T-cell (primary cell): ENCODE measurements at regions of chr2 and their contacts with region 1.

Region 1: DNA sequence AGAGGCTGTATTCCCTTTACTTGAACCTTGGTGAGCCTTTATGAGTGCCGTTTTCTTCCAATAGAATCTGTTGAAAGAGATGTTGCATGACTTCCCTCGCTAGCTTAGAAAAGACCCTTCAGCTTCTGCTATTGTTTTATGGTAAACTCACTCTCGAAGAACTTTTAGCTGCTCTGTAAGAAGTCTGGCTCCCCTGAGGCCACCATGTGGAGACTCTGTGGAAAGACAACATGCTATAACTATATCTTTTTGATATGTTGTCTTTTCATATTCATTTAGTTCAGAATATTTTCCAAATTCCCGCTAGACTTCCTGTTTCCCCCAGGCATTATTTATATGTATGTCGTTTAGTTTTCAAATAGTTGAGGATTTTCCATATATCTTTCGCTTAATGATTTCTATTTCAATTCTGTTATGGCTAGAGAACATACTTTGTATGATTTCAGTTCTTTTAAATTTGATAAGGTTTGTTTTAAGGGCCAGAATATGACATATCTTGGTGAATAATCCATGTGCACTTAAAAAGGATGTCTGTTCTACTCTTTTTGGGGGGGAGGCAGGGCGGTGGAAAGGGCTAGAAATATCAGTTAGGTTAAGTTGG is 64.1 kb downstream of the PTPN4 start:
- DNase-seq: peak in 27 of 35 experiments; percentile 10 to 62 (median 30)
- ATAC-seq: peak; percentile 68 to 74 (median 71)
- H3K4me3 ChIP-seq: no peak overlapping the region
- H3K4me3 Mint-ChIP-seq: no peak overlapping the region
- H3K27ac ChIP-seq: no peak overlapping the region
- H3K27ac Mint-ChIP-seq: peak overlapping the region; percentile 41 to 48
- H3K4me1 ChIP-seq: peaks cover 0 to 4% of the 10 kb centered on the region in 2 experiments
- H3K4me1 Mint-ChIP-seq: peaks cover 50 to 69% (median 67%) of the 10 kb centered on the region in 3 donors
- H3K27me3 ChIP-seq: no peaks in the 10 kb centered on the region
- H3K27me3 Mint-ChIP-seq: no peaks in the 10 kb centered on the region

Region 2: DNA sequence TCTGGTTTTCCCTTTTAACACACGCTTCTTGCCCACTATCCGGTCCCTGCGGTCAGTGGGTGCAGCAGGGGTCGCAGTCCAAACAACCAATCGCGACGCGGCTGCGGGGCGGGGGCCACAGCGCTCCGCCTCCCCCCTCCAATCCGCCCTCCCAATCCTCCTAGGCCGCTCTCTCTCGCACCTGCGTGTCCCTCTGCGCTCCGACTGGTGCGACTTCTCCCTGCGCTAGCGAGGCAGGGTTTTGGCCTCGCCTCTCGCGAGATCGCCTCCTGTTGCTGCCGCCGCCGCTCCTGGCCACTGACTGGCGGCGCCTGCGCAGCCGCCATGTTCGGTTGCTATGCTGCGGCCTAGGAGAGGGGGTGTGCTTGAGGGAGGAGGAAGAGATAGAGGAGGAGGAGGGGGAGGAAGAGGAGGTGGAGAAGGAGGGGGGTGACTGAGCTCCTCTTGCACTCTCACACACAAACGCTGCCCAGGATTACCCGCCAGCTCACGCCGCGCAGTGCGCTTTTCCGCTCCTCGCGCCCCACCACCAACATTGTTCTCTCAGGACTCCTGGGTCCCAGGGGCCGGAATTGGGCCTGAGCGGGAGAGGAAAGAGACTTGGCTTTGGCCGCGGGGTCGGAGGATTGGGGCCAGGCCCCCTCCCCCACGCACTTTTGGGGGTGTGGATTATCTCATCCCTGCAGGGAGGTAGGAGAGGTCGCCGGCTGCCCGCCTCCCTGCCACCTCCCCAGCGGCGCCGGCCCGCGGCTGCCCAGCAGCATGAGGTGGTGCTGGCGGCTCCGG is 64.2 kb before region 1 on chr2 and contains the start of gene PTPN4:
- CTCF ChIA-PET with region 1: interaction called, 3 to 10 read pairs
- POLR2A ChIA-PET with region 1: interaction called in 1 of 2 experiments, 6 read pairs
- DNase-seq: peak; percentile 86 to 99 (median 96)
- ATAC-seq: peak; percentile 89 to 92 (median 90)
- H3K4me3 ChIP-seq: peak within 1 kb of the TSS; percentile 95 to 98
- H3K4me3 Mint-ChIP-seq: peak within 1 kb of the TSS; percentile 83 to 93 (median 93)
- H3K27ac ChIP-seq: peak within 1 kb of the TSS; percentile 89
- H3K27ac Mint-ChIP-seq: peak within 1 kb of the TSS; percentile 82 to 84
- H3K4me1 ChIP-seq: peaks cover 7 to 19% of the 10 kb centered on the region in 2 experiments
- H3K4me1 Mint-ChIP-seq: peaks cover 42 to 45% (median 45%) of the 10 kb centered on the region in 3 donors
- H3K27me3 ChIP-seq: no peaks in the 10 kb centered on the region
- H3K27me3 Mint-ChIP-seq: no peaks in the 10 kb centered on the region
- total RNA-seq, gene PTPN4: 105 to 134 (median 126) TPM

Region 3: DNA sequence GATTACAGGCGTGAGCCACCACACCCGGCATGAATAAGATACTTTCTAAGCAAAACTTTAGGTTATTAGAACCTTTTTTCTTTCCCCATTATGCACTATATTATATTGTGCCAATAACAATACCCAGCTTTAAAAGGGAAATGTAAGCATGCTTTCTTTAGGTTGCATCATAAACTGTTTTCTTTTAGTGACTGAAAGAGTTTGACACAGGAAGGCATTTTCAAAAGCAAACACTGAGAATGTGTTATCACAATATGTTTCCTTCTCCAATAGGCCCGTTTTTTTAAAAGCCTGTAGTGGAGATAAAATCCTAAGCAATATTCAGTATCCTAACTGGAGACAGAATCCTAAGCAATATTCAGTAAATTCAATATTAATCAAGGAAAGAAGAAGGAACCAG is 172.3 kb after region 1 on chr2:
- CTCF ChIA-PET with region 1: interaction called in 1 of 2 experiments, 13 read pairs
- POLR2A ChIA-PET with region 1: no interaction called
- DNase-seq: no peak
- ATAC-seq: no peak
- H3K4me3 ChIP-seq: no peak overlapping the region
- H3K4me3 Mint-ChIP-seq: no peak overlapping the region
- H3K27ac ChIP-seq: no peak overlapping the region
- H3K27ac Mint-ChIP-seq: no peak overlapping the region
- H3K4me1 ChIP-seq: no peaks in the 10 kb centered on the region
- H3K4me1 Mint-ChIP-seq: no peaks in the 10 kb centered on the region
- H3K27me3 ChIP-seq: peaks cover 0 to 2% of the 10 kb centered on the region in 2 experiments
- H3K27me3 Mint-ChIP-seq: peaks cover 5 to 6% of the 10 kb centered on the region in 2 donors